ENCODE measurements at regions of chrX and their contacts with region 1.

Region 1: GRCh38 chrX:68929332-68930150 is 100.7 kb downstream of the EFNB1 start:
- DNase-seq: no peak
- ATAC-seq: peak; percentile 43
- H3K4me3 ChIP-seq: no peak overlapping the region
- H3K27ac ChIP-seq: peak overlapping the region in 1 of 2 donors; percentile 13
- H3K4me1 ChIP-seq: no peaks in the 10 kb centered on the region
- H3K27me3 ChIP-seq: no peaks in the 10 kb centered on the region
- CTCF ChIP-seq: no peak

Region 2: GRCh38 chrX:68989865-68990606 is 60.5 kb after region 1 on chrX:
- intact Hi-C with region 1: loop called in 1 of 2 experiments (anchors 10 kb)
- DNase-seq: peak in 2 of 4 donors; percentile 76 to 84
- ATAC-seq: peak; percentile 76
- H3K4me3 ChIP-seq: no peak overlapping the region
- H3K27ac ChIP-seq: no peak overlapping the region
- H3K4me1 ChIP-seq: peaks cover 3 to 6% of the 10 kb centered on the region in 2 donors
- H3K27me3 ChIP-seq: no peaks in the 10 kb centered on the region
- CTCF ChIP-seq: no peak

Region 3: DNA sequence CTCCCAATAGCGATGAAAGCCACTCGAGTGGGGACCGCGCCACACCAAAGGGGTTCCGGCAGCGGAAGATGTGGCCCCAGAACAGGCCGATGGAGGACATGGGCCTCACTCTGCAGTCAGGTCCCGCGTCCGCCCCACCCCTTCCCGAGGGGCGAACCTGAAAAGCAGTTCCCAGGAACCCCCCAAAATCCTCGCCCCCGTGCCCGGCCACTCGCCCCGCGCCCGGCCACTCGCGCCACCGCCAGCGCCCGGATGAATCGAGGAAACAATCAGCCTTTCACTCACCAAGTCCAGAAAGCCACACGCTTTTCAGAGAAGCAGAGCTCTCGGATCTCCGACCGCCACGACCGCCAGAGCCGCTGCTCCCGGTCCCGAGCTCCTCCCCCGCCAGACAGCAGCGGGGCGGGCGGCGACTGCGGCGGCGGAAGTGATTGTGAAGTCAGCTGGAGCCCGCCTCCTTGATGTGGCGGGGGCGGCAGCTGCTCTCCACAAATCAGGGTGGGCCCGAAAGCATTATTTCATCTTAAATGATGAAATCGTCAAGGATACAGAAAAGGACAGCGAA is 235.6 kb after region 1 on chrX and contains the start of gene PJA1:
- intact Hi-C with region 1: no loop called
- DNase-seq: peak; percentile 49 to 89 (median 76)
- ATAC-seq: peak; percentile 95
- H3K4me3 ChIP-seq: peak within 1 kb of the TSS; percentile 43 to 62
- H3K27ac ChIP-seq: peak within 1 kb of the TSS; percentile 42 to 70
- H3K4me1 ChIP-seq: no peaks in the 10 kb centered on the region
- H3K27me3 ChIP-seq: no peaks in the 10 kb centered on the region
- CTCF ChIP-seq: no peak
- polyA plus RNA-seq, gene PJA1: 89.0 to 111 (median 95.1) TPM

Measured in left lung (tissue), 14 donors.